ENCODE measurements at regions of chr12 and their contacts with region 1.

Region 1: DNA sequence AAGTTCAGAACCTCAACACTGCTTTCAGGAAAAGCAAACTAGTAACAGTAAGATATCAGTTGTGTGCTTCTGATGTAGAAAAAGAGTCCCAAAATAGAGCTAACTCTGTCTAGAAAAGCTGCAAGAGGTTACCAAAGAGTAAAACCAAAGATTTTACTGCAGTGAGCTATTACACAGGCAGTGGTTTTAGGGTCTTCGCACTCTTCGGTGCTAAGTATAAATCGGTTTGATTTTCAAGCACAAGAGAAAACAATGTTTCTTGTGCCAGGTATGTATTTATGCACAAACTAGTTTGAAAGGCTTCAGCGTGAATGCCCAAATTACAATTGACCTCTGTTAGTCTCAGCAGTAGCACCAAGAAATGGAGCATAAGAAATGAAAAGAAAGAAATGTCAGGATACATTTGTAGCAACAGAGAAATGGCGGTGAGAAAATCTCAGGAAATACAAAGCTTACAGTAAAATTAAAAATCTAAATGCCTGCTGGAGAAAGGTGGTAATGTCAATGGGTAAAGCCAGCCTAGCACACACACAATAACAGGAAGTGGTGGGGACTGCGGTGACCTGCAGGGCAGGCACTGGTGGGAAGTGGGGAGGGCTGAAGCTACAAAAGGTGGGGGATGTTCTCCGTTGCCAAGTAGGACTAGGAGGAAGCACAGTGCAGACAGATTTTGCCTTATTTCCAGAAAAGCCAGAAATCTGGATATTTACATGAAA is 18.0 kb upstream of the DYRK2 start:
- DNase-seq: peak; percentile 87
- ATAC-seq: peak; percentile 100
- H3K4me3 ChIP-seq: peak overlapping the region in 3 of 5 experiments; percentile 6 to 55 (median 20)
- H3K4me3 Mint-ChIP-seq: peak overlapping the region; percentile 67
- H3K27ac ChIP-seq: peak overlapping the region; percentile 71 to 85
- H3K27ac Mint-ChIP-seq: peak overlapping the region; percentile 94
- H3K4me1 ChIP-seq: peaks cover 55 to 56% of the 10 kb centered on the region in 2 donors
- H3K4me1 Mint-ChIP-seq: peaks cover 60% of the 10 kb centered on the region
- H3K27me3 ChIP-seq: no peaks in the 10 kb centered on the region
- H3K27me3 Mint-ChIP-seq: no peaks in the 10 kb centered on the region
- CTCF ChIP-seq: no peak

Region 2: DNA sequence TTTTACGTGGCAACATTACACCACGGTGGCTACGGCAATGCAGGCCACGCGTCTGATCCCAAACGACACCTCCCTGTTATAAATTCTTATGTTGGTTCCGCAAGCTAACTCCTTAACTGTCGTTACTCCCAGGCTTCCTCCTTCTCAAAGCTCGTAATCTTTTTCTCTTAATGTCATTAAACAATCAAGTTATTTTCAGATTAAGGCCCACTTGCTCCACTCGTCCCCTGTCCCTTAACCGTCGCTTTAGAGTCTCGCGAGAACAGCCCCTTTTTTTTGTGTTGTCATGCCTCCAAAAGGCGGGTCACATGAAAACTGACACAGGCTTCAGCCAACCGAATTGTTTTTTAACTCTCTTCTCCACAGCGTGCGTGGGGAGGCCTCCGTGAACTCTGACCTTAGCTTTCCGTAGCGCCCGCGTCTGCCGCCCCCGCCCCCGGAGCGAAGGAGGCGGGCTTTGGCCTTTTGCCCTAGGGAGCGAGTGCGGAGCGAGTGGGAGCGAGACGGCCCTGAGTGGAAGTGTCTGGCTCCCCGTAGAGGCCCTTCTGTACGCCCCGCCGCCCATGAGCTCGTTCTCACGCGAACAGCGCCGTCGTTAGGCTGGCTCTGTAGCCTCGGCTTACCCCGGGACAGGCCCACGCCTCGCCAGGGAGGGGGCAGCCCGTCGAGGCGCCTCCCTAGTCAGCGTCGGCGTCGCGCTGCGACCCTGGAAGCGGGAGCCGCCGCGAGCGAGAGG is 361.5 kb before region 1 on chr12 and contains the start of gene CAND1:
- CTCF ChIA-PET with region 1: no interaction called
- POLR2A ChIA-PET with region 1: no interaction called
- intact Hi-C with region 1: loop called (anchors 5 kb)
- DNase-seq: peak; percentile 99
- ATAC-seq: peak; percentile 78
- H3K4me3 ChIP-seq: peak within 1 kb of the TSS; percentile 67 to 94 (median 80)
- H3K4me3 Mint-ChIP-seq: peak within 1 kb of the TSS; percentile 86
- H3K27ac ChIP-seq: peak within 1 kb of the TSS; percentile 90 to 94
- H3K27ac Mint-ChIP-seq: peak within 1 kb of the TSS; percentile 91
- H3K4me1 ChIP-seq: peaks cover 24 to 25% of the 10 kb centered on the region in 2 donors
- H3K4me1 Mint-ChIP-seq: peaks cover 34% of the 10 kb centered on the region
- H3K27me3 ChIP-seq: no peaks in the 10 kb centered on the region
- H3K27me3 Mint-ChIP-seq: no peaks in the 10 kb centered on the region
- CTCF ChIP-seq: no peak
- total RNA-seq, gene CAND1: 108 and 110 TPM in 2 replicates

Region 3: DNA sequence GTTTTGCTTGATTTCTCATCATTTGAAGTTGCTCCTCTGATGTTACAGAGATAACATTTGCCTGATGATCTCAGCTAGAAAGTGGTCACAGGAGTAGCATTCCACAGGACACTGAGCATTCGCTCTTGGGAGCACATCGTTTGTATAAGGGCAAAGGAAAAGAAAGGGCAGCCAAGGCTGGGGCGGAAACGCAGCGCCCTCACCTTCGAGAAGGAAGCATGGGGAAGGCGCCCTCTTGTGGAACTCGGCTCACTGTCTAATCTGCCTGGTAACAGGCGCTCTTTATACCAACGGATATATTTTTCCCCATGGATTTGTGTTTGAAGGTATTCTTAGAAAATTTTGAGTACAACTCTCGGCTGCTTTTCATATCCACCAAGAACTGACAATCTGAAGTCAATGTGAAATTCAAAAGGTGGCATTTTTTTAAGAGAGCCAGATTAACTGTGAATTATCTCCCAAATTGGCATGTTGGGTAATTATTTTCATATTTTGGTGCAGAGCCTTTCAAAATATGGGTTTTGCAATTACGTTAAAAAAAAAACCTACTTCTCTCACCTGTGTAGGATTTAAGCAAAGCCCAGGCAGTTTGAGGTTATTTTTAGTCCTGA is 188.7 kb before region 1 on chr12:
- CTCF ChIA-PET with region 1: interaction called, 5 read pairs
- POLR2A ChIA-PET with region 1: no interaction called
- intact Hi-C with region 1: loop called (anchors 1 kb)
- DNase-seq: peak; percentile 76
- ATAC-seq: peak; percentile 88
- H3K4me3 ChIP-seq: no peak overlapping the region
- H3K4me3 Mint-ChIP-seq: peak overlapping the region; percentile 18
- H3K27ac ChIP-seq: no peak overlapping the region
- H3K27ac Mint-ChIP-seq: no peak overlapping the region
- H3K4me1 ChIP-seq: peaks cover 7 to 8% of the 10 kb centered on the region in 2 donors
- H3K4me1 Mint-ChIP-seq: peaks cover 8% of the 10 kb centered on the region
- H3K27me3 ChIP-seq: no peaks in the 10 kb centered on the region
- H3K27me3 Mint-ChIP-seq: no peaks in the 10 kb centered on the region
- CTCF ChIP-seq: peak; percentile 83

Region 4: DNA sequence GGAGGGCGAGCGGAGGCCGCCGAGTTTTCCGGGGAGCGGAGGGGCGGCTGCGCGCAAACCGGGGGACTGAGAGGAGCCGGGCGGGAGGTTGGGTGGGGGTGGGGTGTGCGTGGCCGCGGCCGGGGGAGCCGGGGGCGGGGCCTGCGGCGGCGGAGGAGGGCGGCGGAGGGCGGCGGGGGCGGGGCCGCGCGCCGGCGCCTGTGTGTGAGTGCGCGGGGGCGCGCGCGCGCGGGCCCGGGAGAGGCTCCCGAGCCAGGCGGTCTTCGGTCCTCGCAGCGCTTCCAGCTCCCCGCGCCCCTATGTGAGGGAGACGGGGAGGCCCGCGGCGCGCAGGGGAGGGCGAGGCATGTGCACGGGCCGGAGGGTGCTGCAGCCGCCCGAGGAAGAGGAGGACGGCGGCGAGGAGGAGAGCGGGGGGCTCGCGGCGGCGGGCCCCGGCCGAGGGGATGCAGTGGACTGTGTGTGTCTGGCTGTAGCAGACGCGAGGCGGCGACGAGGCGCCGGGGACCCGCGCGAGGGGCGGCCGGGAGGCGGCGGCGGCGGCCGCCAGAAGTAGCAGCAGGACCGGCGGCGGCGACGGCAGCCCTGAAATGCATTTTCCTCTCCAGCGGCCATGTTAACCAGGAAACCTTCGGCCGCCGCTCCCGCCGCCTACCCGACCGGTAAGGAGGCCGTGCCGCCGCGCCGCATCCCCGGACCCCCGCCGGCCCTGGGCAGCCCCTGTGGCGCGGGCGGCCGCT is 18.2 kb after region 1 on chr12 and contains the start of gene DYRK2:
- CTCF ChIA-PET with region 1: interaction called, 16 read pairs
- POLR2A ChIA-PET with region 1: interaction called, 18 read pairs
- intact Hi-C with region 1: loop called (anchors 1 kb)
- DNase-seq: peak; percentile 88
- ATAC-seq: peak; percentile 64
- H3K4me3 ChIP-seq: peak within 1 kb of the TSS; percentile 49 to 95 (median 85)
- H3K4me3 Mint-ChIP-seq: peak within 1 kb of the TSS; percentile 98
- H3K27ac ChIP-seq: peak within 1 kb of the TSS; percentile 42 to 77
- H3K27ac Mint-ChIP-seq: peak within 1 kb of the TSS; percentile 95
- H3K4me1 ChIP-seq: peaks cover 25 to 35% of the 10 kb centered on the region in 2 donors
- H3K4me1 Mint-ChIP-seq: peaks cover 39% of the 10 kb centered on the region
- H3K27me3 ChIP-seq: no peaks in the 10 kb centered on the region
- H3K27me3 Mint-ChIP-seq: no peaks in the 10 kb centered on the region
- CTCF ChIP-seq: peak; percentile 15
- total RNA-seq, gene DYRK2: 75.3 and 77.9 TPM in 2 replicates

Region 5: GRCh38 chr12:67991158-67991557 is 360.6 kb after region 1 on chr12:
- CTCF ChIA-PET with region 1: no interaction called
- POLR2A ChIA-PET with region 1: interaction called, 3 read pairs
- intact Hi-C with region 1: loop called (anchors 2 kb)
- DNase-seq: peak; percentile 79
- ATAC-seq: peak; percentile 82
- H3K4me3 ChIP-seq: peak overlapping the region in 4 of 5 experiments; percentile 7 to 71 (median 38)
- H3K4me3 Mint-ChIP-seq: peak overlapping the region; percentile 74
- H3K27ac ChIP-seq: peak overlapping the region; percentile 95 to 98
- H3K27ac Mint-ChIP-seq: peak overlapping the region; percentile 91
- H3K4me1 ChIP-seq: peaks cover 54 to 71% of the 10 kb centered on the region in 2 donors
- H3K4me1 Mint-ChIP-seq: peaks cover 67% of the 10 kb centered on the region
- H3K27me3 ChIP-seq: no peaks in the 10 kb centered on the region
- H3K27me3 Mint-ChIP-seq: no peaks in the 10 kb centered on the region
- CTCF ChIP-seq: no peak

Region 6: GRCh38 chr12:68331869-68332727 is 701.6 kb after region 1 on chr12 and contains the start of gene MDM1:
- CTCF ChIA-PET with region 1: no interaction called
- POLR2A ChIA-PET with region 1: no interaction called
- intact Hi-C with region 1: no loop called
- DNase-seq: peak; percentile 97
- ATAC-seq: peak; percentile 97
- H3K4me3 ChIP-seq: peak within 1 kb of the TSS; percentile 79 to 85 (median 82)
- H3K4me3 Mint-ChIP-seq: peak within 1 kb of the TSS; percentile 94
- H3K27ac ChIP-seq: peak within 1 kb of the TSS; percentile 55 to 78
- H3K27ac Mint-ChIP-seq: peak within 1 kb of the TSS; percentile 90
- H3K4me1 ChIP-seq: peaks cover 12 to 14% of the 10 kb centered on the region in 2 donors
- H3K4me1 Mint-ChIP-seq: peaks cover 40% of the 10 kb centered on the region
- H3K27me3 ChIP-seq: no peaks in the 10 kb centered on the region
- H3K27me3 Mint-ChIP-seq: no peaks in the 10 kb centered on the region
- CTCF ChIP-seq: no peak
- total RNA-seq, gene MDM1: 38.3 and 38.9 TPM in 2 replicates

Measured in B cell (primary cell).